ENCODE measurements at regions of chr7 and their contacts with region 1.

Region 1: DNA sequence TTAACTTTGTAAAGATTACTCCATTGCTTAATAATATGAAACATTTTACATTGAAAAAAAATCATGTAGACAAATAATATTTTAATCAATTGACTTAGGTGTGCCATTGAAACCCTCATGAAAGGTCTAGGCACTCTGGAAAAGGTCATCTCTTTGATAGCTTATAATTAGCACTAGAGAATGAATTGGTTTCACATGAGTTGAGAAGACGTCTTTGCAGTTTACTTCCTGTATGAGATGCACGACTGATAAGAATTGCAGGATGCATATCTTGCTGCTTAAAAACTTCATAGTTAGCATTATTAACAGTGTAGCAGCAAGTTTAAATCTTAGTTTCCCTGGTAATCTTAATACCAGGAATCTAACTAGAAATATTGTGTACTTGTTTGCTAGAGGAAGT is 614.2 kb upstream of the COBL start:
- DNase-seq: no peak
- ATAC-seq: no peak
- H3K4me3 ChIP-seq: no peak overlapping the region
- H3K27ac ChIP-seq: no peak overlapping the region
- H3K4me1 ChIP-seq: no peaks in the 10 kb centered on the region
- H3K27me3 ChIP-seq: no peaks in the 10 kb centered on the region
- CTCF ChIP-seq: no peak
- POLR2A ChIP-seq: no peak
- RAD21 ChIP-seq: no peak

Region 2: DNA sequence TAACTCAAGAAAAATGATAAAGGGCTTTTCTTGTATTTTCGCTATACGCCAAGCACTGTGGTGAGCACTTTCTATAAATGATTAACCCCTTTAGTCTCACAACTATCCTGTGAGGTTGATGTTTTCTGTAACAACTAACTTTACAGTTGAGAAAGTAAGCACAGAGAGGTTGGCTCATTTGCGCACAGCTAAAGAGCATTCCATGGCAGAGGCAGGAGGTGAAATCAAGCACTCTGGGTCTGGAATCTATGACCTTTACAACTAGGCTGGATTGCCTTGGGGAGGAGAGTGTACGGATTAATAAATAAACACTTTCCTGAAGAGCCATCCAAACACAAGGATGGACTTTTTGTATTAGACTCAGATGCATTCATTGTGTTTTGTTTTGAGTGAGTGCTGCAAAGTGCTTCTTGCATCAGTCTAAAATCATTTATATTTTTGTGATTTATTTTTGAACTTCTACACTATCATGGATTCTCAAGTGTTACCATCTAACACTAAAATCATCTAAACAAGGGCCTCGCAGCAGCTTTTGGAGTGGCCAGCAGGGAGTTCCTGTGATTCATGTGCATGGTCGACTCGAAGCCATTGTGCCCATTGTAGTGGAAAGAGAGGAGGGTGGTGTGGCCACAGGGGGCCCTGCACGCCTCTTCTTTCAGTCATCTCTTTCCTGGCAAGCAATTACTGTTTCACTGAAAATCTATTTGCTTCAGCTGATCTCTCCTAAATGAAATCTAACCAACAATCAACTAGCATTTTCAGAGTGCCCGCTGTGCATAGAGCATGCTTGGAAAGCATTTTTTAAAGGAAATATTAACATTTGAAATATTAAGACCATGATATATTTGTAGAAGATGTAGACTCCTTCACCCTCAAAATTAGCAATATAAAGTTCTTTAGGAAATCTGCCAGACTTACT is 19.2 kb after region 1 on chr7:
- CTCF ChIA-PET with region 1: no interaction called
- POLR2A ChIA-PET with region 1: interaction called, 11 read pairs
- dilution Hi-C with region 1: no loop called
- in situ Hi-C with region 1: no loop called
- intact Hi-C with region 1: no loop called
- DNase-seq: no peak
- ATAC-seq: no peak
- H3K4me3 ChIP-seq: no peak overlapping the region
- H3K27ac ChIP-seq: no peak overlapping the region
- H3K4me1 ChIP-seq: no peaks in the 10 kb centered on the region
- H3K27me3 ChIP-seq: no peaks in the 10 kb centered on the region
- CTCF ChIP-seq: no peak
- POLR2A ChIP-seq: no peak
- RAD21 ChIP-seq: no peak